ENCODE measurements at regions of chr5 and their contacts with region 1.

Region 1: GRCh38 chr5:91318724-91319123 is 64.4 kb downstream of the ARRDC3 start:
- DNase-seq: no peak
- ATAC-seq: no peak
- H3K4me3 ChIP-seq: no peak overlapping the region
- H3K27ac ChIP-seq: no peak overlapping the region
- H3K4me1 ChIP-seq: peaks cover 0 to 23% (median 4%) of the 10 kb centered on the region in 12 donors
- H3K27me3 ChIP-seq: no peaks in the 10 kb centered on the region
- CTCF ChIP-seq: no peak
- POLR2A ChIP-seq: no peak

Region 2: GRCh38 chr5:90359073-90359920 is 959.4 kb before region 1 on chr5:
- intact Hi-C with region 1: no loop called
- DNase-seq: no peak
- ATAC-seq: no peak
- H3K4me3 ChIP-seq: no peak overlapping the region
- H3K27ac ChIP-seq: no peak overlapping the region
- H3K4me1 ChIP-seq: no peaks in the 10 kb centered on the region
- H3K27me3 ChIP-seq: no peaks in the 10 kb centered on the region
- CTCF ChIP-seq: no peak
- POLR2A ChIP-seq: no peak

Region 3: GRCh38 chr5:91361055-91361701 is 42.5 kb after region 1 on chr5:
- intact Hi-C with region 1: loop called in 2 of 10 experiments (anchors 5 to 10 kb)
- DNase-seq: no peak
- ATAC-seq: no peak
- H3K4me3 ChIP-seq: no peak overlapping the region
- H3K27ac ChIP-seq: no peak overlapping the region
- H3K4me1 ChIP-seq: peaks cover 0 to 7% (median 0%) of the 10 kb centered on the region in 12 donors
- H3K27me3 ChIP-seq: no peaks in the 10 kb centered on the region
- CTCF ChIP-seq: no peak
- POLR2A ChIP-seq: no peak